Panc1 (cell line): ENCODE measurements at regions of chr13 and their contacts with region 1.

Region 1: GRCh38 chr13:97242755-97243497 is 20.8 kb downstream of the MBNL2 start:
- DNase-seq: no peak
- ATAC-seq: peak; percentile 74
- H3K4me3 ChIP-seq: peak overlapping the region in 1 of 2 experiments; percentile 23; a peak in 2 of 4 replicates
- H3K27ac ChIP-seq: peak overlapping the region; percentile 100
- H3K4me1 ChIP-seq: peaks cover 94% of the 10 kb centered on the region
- H3K27me3 ChIP-seq: no peaks in the 10 kb centered on the region
- CTCF ChIP-seq: no peak

Region 2: GRCh38 chr13:97433727-97434396 is 190.9 kb after region 1 on chr13 and contains the start of gene RAP2A:
- CTCF ChIA-PET with region 1: no interaction called
- POLR2A ChIA-PET with region 1: interaction called, 15 read pairs
- in situ Hi-C with region 1: no loop called
- intact Hi-C with region 1: no loop called
- DNase-seq: no peak
- ATAC-seq: peak; percentile 79
- H3K4me3 ChIP-seq: peak within 1 kb of the TSS; percentile 89 to 92
- H3K27ac ChIP-seq: peak within 1 kb of the TSS; percentile 89
- H3K4me1 ChIP-seq: peaks cover 23% of the 10 kb centered on the region; the same call in 1 of the 2 replicates
- H3K27me3 ChIP-seq: no peaks in the 10 kb centered on the region
- CTCF ChIP-seq: no peak
- total RNA-seq, gene RAP2A: 44.3 TPM